Activated CD8-positive, alpha-beta memory T cell treated with anti-CD3 and anti-CD28 coated beads, Interleukin-2, amount 10 ng/mL, durations not matched to agents 7 days and 5 days (primary cell): ENCODE measurements at regions of chr5 and their contacts with region 1.

Region 1: DNA sequence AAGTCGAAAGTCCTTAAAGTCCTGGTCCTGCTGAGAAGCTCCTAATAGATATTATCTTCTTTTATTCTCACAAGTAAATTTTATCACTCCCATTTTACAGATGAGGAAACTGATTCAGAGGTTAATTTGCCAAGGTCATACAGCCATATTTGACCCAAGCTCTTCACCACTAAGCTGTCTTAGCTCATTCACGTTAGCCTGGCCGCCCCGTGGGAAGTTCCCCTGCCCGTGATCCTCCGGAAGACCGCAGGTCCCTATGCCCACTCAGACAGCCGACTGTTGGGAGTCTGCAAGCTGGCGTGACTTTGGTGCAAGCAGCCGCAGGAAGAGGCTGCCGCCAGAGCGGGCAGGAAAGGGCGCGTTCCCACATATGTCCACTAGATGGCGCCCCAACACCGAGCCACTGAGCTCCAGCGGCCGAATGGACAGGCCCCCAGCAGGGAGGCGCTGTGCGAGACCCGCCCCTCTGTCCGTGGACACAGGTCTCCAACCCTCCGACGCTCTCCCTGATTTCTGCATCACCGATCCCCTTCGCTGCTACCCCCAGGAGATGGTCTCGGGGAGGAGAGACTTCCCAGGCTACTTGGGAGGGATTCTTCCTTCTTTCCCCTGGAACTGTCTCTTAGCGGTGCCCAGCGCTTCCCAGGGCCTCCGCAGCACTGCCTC is 10.0 kb upstream of the ARAP3 start:
- DNase-seq: peak; percentile 92
- ATAC-seq: peak; percentile 85
- H3K4me3 Mint-ChIP-seq: peak overlapping the region; percentile 76
- H3K27ac Mint-ChIP-seq: peak overlapping the region; percentile 86
- H3K4me1 Mint-ChIP-seq: peaks cover 35% of the 10 kb centered on the region
- H3K27me3 Mint-ChIP-seq: peaks cover 28% of the 10 kb centered on the region

Region 2: GRCh38 chr5:141636413-141637122 is 55.4 kb before region 1 on chr5 and contains the starts of genes HDAC3 and RELL2:
- CTCF ChIA-PET with region 1: interaction called, 27 read pairs
- DNase-seq: peak; percentile 95
- ATAC-seq: peak; percentile 82
- H3K4me3 Mint-ChIP-seq: peak within 1 kb of the TSS; percentile 93
- H3K27ac Mint-ChIP-seq: peak within 1 kb of the TSS; percentile 94
- H3K4me1 Mint-ChIP-seq: peaks cover 58% of the 10 kb centered on the region
- H3K27me3 Mint-ChIP-seq: no peaks in the 10 kb centered on the region
- total RNA-seq, gene HDAC3: 87.1 to 90.0 TPM
- total RNA-seq, gene RELL2: 28.0 to 35.8 TPM

Region 3: GRCh38 chr5:141672848-141673813 is 18.9 kb before region 1 on chr5:
- CTCF ChIA-PET with region 1: interaction called, 39 read pairs
- DNase-seq: no peak
- ATAC-seq: no peak
- H3K4me3 Mint-ChIP-seq: no peak overlapping the region
- H3K27ac Mint-ChIP-seq: no peak overlapping the region
- H3K4me1 Mint-ChIP-seq: no peaks in the 10 kb centered on the region
- H3K27me3 Mint-ChIP-seq: no peaks in the 10 kb centered on the region

Region 4: DNA sequence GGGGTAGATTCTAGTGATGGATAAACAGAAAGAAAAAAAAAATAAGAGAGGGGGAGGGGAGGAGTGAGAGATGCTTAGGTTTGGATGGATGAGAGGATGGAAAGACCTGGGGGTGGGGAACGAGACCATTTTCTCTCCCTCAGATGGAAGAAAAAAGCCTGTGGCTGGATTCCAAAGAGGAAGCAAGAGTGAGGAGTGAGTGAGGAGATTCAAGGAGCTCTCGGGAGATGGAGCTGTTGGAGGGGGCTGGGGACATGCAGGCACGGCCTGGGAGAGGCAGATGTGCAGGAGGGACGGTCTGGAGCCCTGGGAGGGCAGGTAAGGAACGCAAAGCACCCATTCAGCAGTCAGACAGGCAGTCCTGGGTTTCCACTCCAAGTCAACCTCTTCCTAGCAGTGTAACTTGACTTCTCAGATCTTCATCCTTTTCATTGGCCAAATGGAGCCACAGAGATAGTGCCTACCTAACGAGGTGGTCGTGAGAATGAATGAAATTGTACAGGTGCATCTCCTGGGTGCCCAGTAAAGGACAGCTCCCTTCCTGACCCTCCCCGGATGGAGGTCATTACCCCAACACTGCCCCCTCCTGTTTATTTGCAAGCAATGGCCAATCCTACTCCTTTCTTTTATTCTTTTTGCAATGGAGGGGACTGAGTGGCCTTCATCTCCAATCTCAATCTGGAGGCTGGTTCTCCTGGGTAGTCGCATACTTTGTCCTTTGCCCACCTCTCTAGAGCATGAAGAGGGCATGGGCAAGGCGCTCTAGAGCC is 134.0 kb after region 1 on chr5:
- CTCF ChIA-PET with region 1: interaction called, 38 read pairs
- DNase-seq: no peak
- ATAC-seq: no peak
- H3K4me3 Mint-ChIP-seq: no peak overlapping the region
- H3K27ac Mint-ChIP-seq: no peak overlapping the region
- H3K4me1 Mint-ChIP-seq: peaks cover 16% of the 10 kb centered on the region
- H3K27me3 Mint-ChIP-seq: peaks cover 15% of the 10 kb centered on the region

Region 5: GRCh38 chr5:141889282-141889871 is 197.4 kb after region 1 on chr5:
- CTCF ChIA-PET with region 1: interaction called, 333 read pairs
- DNase-seq: no peak
- ATAC-seq: no peak
- H3K4me3 Mint-ChIP-seq: no peak overlapping the region
- H3K27ac Mint-ChIP-seq: no peak overlapping the region
- H3K4me1 Mint-ChIP-seq: no peaks in the 10 kb centered on the region
- H3K27me3 Mint-ChIP-seq: peaks cover 43% of the 10 kb centered on the region

Region 6: GRCh38 chr5:141968914-141969608 is 277.1 kb after region 1 on chr5 and contains the start of gene RNF14:
- CTCF ChIA-PET with region 1: interaction called, 44 read pairs
- DNase-seq: peak; percentile 97
- ATAC-seq: peak; percentile 97
- H3K4me3 Mint-ChIP-seq: peak within 1 kb of the TSS; percentile 88
- H3K27ac Mint-ChIP-seq: peak within 1 kb of the TSS; percentile 92
- H3K4me1 Mint-ChIP-seq: peaks cover 28% of the 10 kb centered on the region
- H3K27me3 Mint-ChIP-seq: no peaks in the 10 kb centered on the region
- total RNA-seq, gene RNF14: 23.8 to 28.2 TPM